Activated T-helper 1 cell treated with anti-CD3 and anti-CD28 coated beads, Interleukin-12 subunit alpha, Interleukin-12 subunit beta, Interleukin-2, Interleukin-4 antibody, amounts not matched to agents 30 ng/mL and 10 ng/mL and 1 ng/mL, durations not matched to agents 14 hours and 24 hours and 36 hours (primary cell): ENCODE measurements at regions of chr4 and their contacts with region 1.

Region 1: DNA sequence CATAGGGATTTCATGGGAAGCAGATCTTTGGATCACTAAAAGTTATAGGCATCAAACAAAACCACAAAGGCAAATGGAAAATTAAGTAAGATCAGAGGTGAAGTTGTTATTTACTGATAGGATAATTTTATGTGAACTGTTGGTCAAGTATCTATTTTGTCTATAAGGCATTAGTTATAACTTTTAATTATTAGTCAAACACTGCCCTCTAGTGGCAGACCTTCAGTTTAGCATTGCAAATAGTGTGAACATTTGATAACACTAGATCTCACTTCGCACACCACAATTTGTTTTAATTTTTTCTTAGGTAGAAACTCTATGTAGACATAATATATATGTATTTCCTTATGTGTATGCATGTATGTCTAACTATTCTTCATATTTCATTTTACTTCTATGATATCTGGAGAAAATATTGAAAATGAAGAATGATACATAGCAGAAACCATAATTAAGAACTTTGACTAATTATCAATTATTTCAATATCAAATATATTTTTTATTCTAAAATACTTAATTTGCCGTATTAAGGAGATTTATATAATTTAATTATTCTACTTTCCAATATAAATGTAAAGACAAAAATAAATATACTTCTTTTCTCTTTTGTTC is 214.5 kb upstream of the TACR3 start:
- DNase-seq: no peak
- H3K4me3 Mint-ChIP-seq: no peak overlapping the region
- H3K27ac Mint-ChIP-seq: no peak overlapping the region
- H3K4me1 Mint-ChIP-seq: no peaks in the 10 kb centered on the region
- H3K27me3 Mint-ChIP-seq: no peaks in the 10 kb centered on the region

Region 2: DNA sequence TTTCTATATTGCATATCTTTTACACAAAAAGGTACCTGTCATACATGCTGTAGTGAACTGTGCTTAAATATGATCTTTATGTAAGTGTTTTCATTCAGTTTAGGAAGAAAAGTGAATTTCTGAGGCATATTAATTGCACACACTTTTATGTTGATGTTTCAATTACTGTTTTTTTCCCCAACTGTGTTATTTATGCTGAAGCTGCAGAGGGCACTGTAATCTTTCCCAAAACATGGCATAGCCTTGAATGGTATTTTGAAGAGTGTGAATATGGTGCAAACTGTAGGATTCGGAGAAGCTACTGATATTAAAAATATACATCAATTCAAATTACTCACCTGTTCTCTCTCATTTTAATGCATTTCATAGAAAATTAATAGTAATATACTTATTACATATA is 730.2 kb before region 1 on chr4:
- intact Hi-C with region 1: loop called (anchors 10 kb)
- DNase-seq: no peak
- H3K4me3 Mint-ChIP-seq: no peak overlapping the region
- H3K27ac Mint-ChIP-seq: no peak overlapping the region
- H3K4me1 Mint-ChIP-seq: no peaks in the 10 kb centered on the region
- H3K27me3 Mint-ChIP-seq: peaks cover 19% of the 10 kb centered on the region

Region 3: GRCh38 chr4:105126158-105126937 is 1192.1 kb after region 1 on chr4:
- intact Hi-C with region 1: no loop called
- DNase-seq: no peak
- H3K4me3 Mint-ChIP-seq: no peak overlapping the region
- H3K27ac Mint-ChIP-seq: no peak overlapping the region
- H3K4me1 Mint-ChIP-seq: no peaks in the 10 kb centered on the region
- H3K27me3 Mint-ChIP-seq: no peaks in the 10 kb centered on the region